ENCODE measurements at regions of chr11 and their contacts with region 1.

Region 1: DNA sequence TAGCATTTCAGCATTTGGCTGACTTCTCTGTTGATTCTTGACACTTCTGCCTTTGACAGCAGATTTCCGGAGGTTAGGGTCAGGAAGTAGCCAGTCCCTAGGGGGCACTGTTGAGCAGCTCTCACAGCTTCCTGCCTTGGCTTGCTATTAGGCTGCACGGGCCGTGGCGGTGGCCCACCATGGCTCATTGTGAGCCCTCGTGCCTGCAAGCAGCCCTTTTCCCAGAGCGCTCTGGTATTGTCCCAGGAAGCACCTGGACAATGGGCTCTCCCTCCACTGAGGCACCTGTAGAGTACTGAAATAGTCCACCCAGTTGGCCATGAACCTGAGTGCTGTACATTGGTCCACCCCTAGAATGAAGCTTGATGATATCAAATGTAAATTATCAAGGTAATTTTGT is 100.2 kb upstream of the GAL start:
- DNase-seq: peak; percentile 37
- H3K4me3 Mint-ChIP-seq: no peak overlapping the region
- H3K27ac Mint-ChIP-seq: no peak overlapping the region
- H3K4me1 Mint-ChIP-seq: peaks cover 18% of the 10 kb centered on the region
- H3K27me3 Mint-ChIP-seq: no peaks in the 10 kb centered on the region
- CTCF ChIP-seq: peak; percentile 51

Region 2: GRCh38 chr11:67732045-67732787 is 851.9 kb before region 1 on chr11:
- CTCF ChIA-PET with region 1: no interaction called
- POLR2A ChIA-PET with region 1: no interaction called
- intact Hi-C with region 1: no loop called
- DNase-seq: no peak
- H3K4me3 Mint-ChIP-seq: no peak overlapping the region
- H3K27ac Mint-ChIP-seq: no peak overlapping the region
- H3K4me1 Mint-ChIP-seq: peaks cover 6% of the 10 kb centered on the region
- H3K27me3 Mint-ChIP-seq: peaks cover 49% of the 10 kb centered on the region
- CTCF ChIP-seq: no peak

Region 3: DNA sequence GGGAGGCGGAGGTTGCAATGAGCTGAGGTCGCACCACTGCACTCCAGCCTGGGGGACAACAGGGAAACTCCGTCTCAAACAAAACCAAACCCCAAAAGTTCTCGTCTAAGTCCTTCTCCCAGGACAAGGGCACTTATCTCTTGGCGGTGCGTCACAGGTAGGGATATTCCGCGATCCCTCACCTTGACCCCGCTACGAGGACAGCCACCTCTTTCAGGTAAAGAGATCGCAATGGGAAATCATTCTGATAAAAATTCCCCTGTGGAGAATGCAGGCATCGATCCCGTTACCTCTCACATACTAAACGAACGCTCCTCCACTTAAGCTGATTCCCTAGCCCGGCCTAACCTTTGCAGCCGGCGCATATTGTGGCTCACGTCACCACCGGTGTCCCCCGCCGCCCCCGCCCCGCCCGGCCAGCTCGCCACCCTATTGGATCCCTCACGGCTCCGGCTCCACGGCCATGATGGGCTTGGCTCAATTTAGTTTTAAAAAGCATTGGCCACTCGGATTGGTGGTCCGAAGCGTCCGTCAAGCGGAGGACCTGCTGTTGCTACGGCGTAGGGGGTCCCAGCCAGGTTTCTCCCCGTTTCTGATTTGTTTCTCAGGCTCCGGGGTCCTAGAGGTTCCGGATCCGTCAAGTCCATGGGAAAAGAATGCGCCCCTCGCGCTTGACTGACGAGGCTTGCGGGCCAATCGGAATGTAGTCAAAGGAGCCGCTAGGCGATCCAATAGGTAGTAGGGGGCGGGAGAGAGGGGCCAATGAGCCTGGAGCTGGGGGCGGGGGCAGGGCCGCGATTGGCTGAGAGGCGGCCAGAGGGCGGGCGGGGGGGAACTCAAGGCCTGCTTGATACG is 124.0 kb before region 1 on chr11:
- CTCF ChIA-PET with region 1: no interaction called
- POLR2A ChIA-PET with region 1: interaction called, 3 read pairs
- intact Hi-C with region 1: loop called (anchors 5 kb)
- DNase-seq: peak; percentile 99
- H3K4me3 Mint-ChIP-seq: peak overlapping the region; percentile 65
- H3K27ac Mint-ChIP-seq: peak overlapping the region; percentile 89
- H3K4me1 Mint-ChIP-seq: peaks cover 17% of the 10 kb centered on the region
- H3K27me3 Mint-ChIP-seq: no peaks in the 10 kb centered on the region
- CTCF ChIP-seq: no peak